Activated B cell treated with CpG ODN at 0.5 μM for 24 hours (primary cell): ENCODE measurements at regions of chr12 and their contacts with region 1.

Region 1: GRCh38 chr12:130938186-130938585 is 15.5 kb upstream of the ADGRD1 start:
- DNase-seq: no peak
- ATAC-seq: no peak
- H3K4me3 Mint-ChIP-seq: no peak overlapping the region
- H3K27ac Mint-ChIP-seq: no peak overlapping the region
- H3K4me1 Mint-ChIP-seq: no peaks in the 10 kb centered on the region
- H3K27me3 Mint-ChIP-seq: peaks cover 2% of the 10 kb centered on the region
- CTCF ChIP-seq: no peak

Region 2: GRCh38 chr12:130236446-130236845 is 701.7 kb before region 1 on chr12:
- CTCF ChIA-PET with region 1: no interaction called
- POLR2A ChIA-PET with region 1: no interaction called
- intact Hi-C with region 1: no loop called
- DNase-seq: no peak
- ATAC-seq: no peak
- H3K4me3 Mint-ChIP-seq: no peak overlapping the region
- H3K27ac Mint-ChIP-seq: no peak overlapping the region
- H3K4me1 Mint-ChIP-seq: no peaks in the 10 kb centered on the region
- H3K27me3 Mint-ChIP-seq: no peaks in the 10 kb centered on the region
- CTCF ChIP-seq: no peak

Region 3: DNA sequence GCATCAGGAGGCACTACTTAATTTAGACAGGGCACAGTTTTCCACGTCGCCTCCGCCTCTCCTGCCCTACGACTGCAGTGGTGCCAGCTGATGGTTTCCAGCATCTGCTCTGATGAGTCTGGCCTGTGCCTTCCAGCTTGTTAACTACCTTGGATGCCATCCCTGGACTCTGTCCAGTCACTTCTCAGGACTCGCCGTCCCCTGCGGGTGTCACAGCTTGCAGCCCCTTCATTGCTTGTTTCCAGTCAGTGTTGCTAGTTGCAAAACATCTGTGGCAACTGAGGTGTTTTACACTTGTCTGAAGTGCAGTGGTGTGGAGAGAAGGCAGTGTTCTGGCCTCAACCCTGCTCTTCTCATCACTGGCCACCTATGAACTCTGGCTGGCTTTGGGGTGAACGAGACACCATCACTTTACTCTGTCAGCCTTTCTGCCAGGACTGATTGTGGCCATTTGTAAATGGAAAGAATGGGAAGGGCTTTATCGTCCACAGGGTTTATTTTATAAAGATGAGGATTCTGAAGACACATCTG is 23.8 kb after region 1 on chr12:
- CTCF ChIA-PET with region 1: no interaction called
- POLR2A ChIA-PET with region 1: interaction called, 10 read pairs
- intact Hi-C with region 1: no loop called
- DNase-seq: no peak
- ATAC-seq: no peak
- H3K4me3 Mint-ChIP-seq: no peak overlapping the region
- H3K27ac Mint-ChIP-seq: no peak overlapping the region
- H3K4me1 Mint-ChIP-seq: no peaks in the 10 kb centered on the region
- H3K27me3 Mint-ChIP-seq: peaks cover 8% of the 10 kb centered on the region
- CTCF ChIP-seq: no peak

Region 4: GRCh38 chr12:131242741-131243496 is 304.7 kb after region 1 on chr12:
- CTCF ChIA-PET with region 1: no interaction called
- POLR2A ChIA-PET with region 1: no interaction called
- intact Hi-C with region 1: no loop called
- DNase-seq: no peak
- ATAC-seq: no peak
- H3K4me3 Mint-ChIP-seq: no peak overlapping the region
- H3K27ac Mint-ChIP-seq: no peak overlapping the region
- H3K4me1 Mint-ChIP-seq: no peaks in the 10 kb centered on the region
- H3K27me3 Mint-ChIP-seq: peaks cover 2% of the 10 kb centered on the region
- CTCF ChIP-seq: no peak